HepG2 (cell line): ENCODE measurements at regions of chr4 and their contacts with region 1.

Region 1: GRCh38 chr4:83455281-83456129 is at the starts of genes HELQ and MRPS18C:
- DNase-seq: peak; percentile 99
- ATAC-seq: peak; percentile 95
- H3K4me3 ChIP-seq: peak within 1 kb of the TSS; percentile 78 to 98 (median 90)
- H3K27ac ChIP-seq: peak within 1 kb of the TSS; percentile 93
- H3K4me1 ChIP-seq: peaks cover 29% of the 10 kb centered on the region
- H3K27me3 ChIP-seq: no peaks in the 10 kb centered on the region; a peak in 1 of 5 replicates
- CTCF ChIP-seq: peak; percentile 29
- EP300 ChIP-seq: peak in 1 of 2 experiments; percentile 72; a peak in 3 of 4 replicates
- POLR2A ChIP-seq: peak; percentile 91 to 97
- RAD21 ChIP-seq: no peak; the same call in 1 of the 2 replicates
- total RNA-seq, gene HELQ: 10.2 and 10.8 TPM in 2 replicates
- total RNA-seq, gene MRPS18C: 124 and 141 TPM in 2 replicates

Region 2: GRCh38 chr4:83369831-83370639 is 85.5 kb before region 1 on chr4:
- CTCF ChIA-PET with region 1: no interaction called
- POLR2A ChIA-PET with region 1: interaction called, 5 read pairs
- in situ Hi-C with region 1: loop called (anchors 5 kb)
- intact Hi-C with region 1: no loop called
- DNase-seq: peak; percentile 44
- ATAC-seq: peak; percentile 90
- H3K4me3 ChIP-seq: no peak overlapping the region; a peak in 1 of 6 replicates
- H3K27ac ChIP-seq: no peak overlapping the region
- H3K4me1 ChIP-seq: peaks cover 47% of the 10 kb centered on the region
- H3K27me3 ChIP-seq: no peaks in the 10 kb centered on the region
- CTCF ChIP-seq: peak; percentile 69
- EP300 ChIP-seq: no peak
- POLR2A ChIP-seq: no peak
- RAD21 ChIP-seq: no peak

Region 3: GRCh38 chr4:83484500-83485461 is 29.3 kb after region 1 on chr4 and contains the start of gene ABRAXAS1:
- CTCF ChIA-PET with region 1: no interaction called
- POLR2A ChIA-PET with region 1: interaction called, 12 read pairs
- in situ Hi-C with region 1: no loop called
- intact Hi-C with region 1: loop called (anchors 1 kb)
- DNase-seq: peak; percentile 91
- ATAC-seq: peak; percentile 93
- H3K4me3 ChIP-seq: peak within 1 kb of the TSS; percentile 62 to 78 (median 72)
- H3K27ac ChIP-seq: peak within 1 kb of the TSS; percentile 74
- H3K4me1 ChIP-seq: peaks cover 37% of the 10 kb centered on the region
- H3K27me3 ChIP-seq: no peaks in the 10 kb centered on the region
- CTCF ChIP-seq: no peak
- EP300 ChIP-seq: no peak
- POLR2A ChIP-seq: peak; percentile 84 to 94
- RAD21 ChIP-seq: 0 out of 2 replicates have a peak, but pooled peaks have one; percentile 22
- total RNA-seq, gene ABRAXAS1: 14.1 and 20.8 TPM in 2 replicates